Mucosa of descending colon (tissue), 3 donors: ENCODE measurements at regions of chr3 and their contacts with region 1.

Region 1: GRCh38 chr3:156664831-156665178 is 9.6 kb upstream of the TIPARP start:
- DNase-seq: no peak
- ATAC-seq: peak; percentile 32
- H3K4me3 ChIP-seq: no peak overlapping the region
- H3K4me1 ChIP-seq: peaks cover 15% of the 10 kb centered on the region
- CTCF ChIP-seq: no peak

Region 2: GRCh38 chr3:156535162-156535627 is 129.6 kb before region 1 on chr3:
- intact Hi-C with region 1: no loop called
- DNase-seq: peak in 2 of 3 donors; percentile 39 to 40
- ATAC-seq: peak; percentile 86
- H3K4me3 ChIP-seq: no peak overlapping the region
- H3K4me1 ChIP-seq: no peaks in the 10 kb centered on the region
- CTCF ChIP-seq: no peak

Region 3: GRCh38 chr3:156563900-156564682 is 100.7 kb before region 1 on chr3:
- intact Hi-C with region 1: loop called (anchors 10 kb)
- DNase-seq: no peak
- ATAC-seq: peak; percentile 95
- H3K4me3 ChIP-seq: no peak overlapping the region
- H3K4me1 ChIP-seq: no peaks in the 10 kb centered on the region
- CTCF ChIP-seq: no peak